Spleen (tissue), 13 donors: ENCODE measurements at regions of chr7 and their contacts with region 1.

Region 1: GRCh38 chr7:100705753-100706671 is at the start of gene POP7:
- DNase-seq: peak; percentile 99
- H3K4me3 ChIP-seq: peak within 1 kb of the TSS; percentile 72 to 92 (median 82)
- H3K27ac ChIP-seq: peak within 1 kb of the TSS; percentile 90 to 98 (median 94)
- H3K4me1 ChIP-seq: peaks cover 6 to 31% (median 26%) of the 10 kb centered on the region in 6 donors
- H3K27me3 ChIP-seq: no peaks in the 10 kb centered on the region
- CTCF ChIP-seq: no peak
- POLR2A ChIP-seq: peak in 1 of 3 donors; percentile 10
- total RNA-seq, gene POP7: 14.9 to 22.8 (median 17.2) TPM

Region 2: DNA sequence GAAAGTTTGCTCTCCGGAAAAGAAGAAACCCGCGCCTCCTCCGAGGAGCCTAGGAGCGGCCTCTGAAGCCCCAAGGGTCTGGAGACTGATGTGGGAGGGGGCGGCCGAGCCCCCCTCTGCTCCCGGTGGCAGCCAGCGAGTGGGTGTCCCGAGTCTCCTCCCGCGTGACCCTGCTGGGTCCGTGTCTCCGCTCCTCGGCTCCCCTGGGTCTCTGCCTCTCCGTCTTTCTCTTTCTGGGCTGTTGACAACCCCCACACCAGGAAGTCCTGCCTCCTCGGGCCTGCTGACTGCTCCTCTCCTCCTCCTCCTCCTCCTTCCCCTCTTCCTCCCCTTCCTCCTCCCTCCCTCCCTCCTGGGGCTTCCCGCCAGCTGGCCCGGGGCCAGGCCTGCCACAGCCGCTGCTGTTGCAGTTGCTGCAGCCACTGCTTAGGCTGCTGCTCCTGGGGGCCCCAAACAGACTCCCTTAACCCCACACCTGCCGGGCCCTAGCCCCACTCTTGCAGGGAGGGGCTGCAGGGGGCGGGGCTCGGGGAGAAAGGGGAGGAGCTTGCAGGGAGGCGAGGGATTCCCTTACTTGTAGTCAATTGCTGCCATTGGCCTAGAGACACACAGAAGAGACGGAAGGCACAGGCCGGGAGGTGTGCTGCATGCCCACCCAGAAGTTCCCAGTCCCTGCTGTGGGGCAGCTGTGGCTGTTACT is 226.9 kb before region 1 on chr7 and contains the start of gene TSC22D4:
- intact Hi-C with region 1: loop called (anchors 10 kb)
- DNase-seq: peak; percentile 98
- H3K4me3 ChIP-seq: peak within 1 kb of the TSS; percentile 90 to 99 (median 96)
- H3K27ac ChIP-seq: peak within 1 kb of the TSS; percentile 88 to 99 (median 98)
- H3K4me1 ChIP-seq: peaks cover 37 to 78% (median 61%) of the 10 kb centered on the region in 6 donors
- H3K27me3 ChIP-seq: peaks cover 0 to 7% (median 0%) of the 10 kb centered on the region in 7 donors
- CTCF ChIP-seq: peak in 1 of 11 experiments; percentile 18
- POLR2A ChIP-seq: peak; percentile 8 to 89 (median 85)
- total RNA-seq, gene TSC22D4: 67.1 to 119 (median 98.8) TPM

Region 3: GRCh38 chr7:100827330-100828227 is 121.6 kb after region 1 on chr7 and contains the start of gene EPHB4:
- intact Hi-C with region 1: no loop called
- DNase-seq: peak; percentile 87
- H3K4me3 ChIP-seq: peak within 1 kb of the TSS; percentile 45 to 80 (median 60)
- H3K27ac ChIP-seq: peak within 1 kb of the TSS; percentile 35 to 87 (median 76)
- H3K4me1 ChIP-seq: peaks cover 2 to 77% (median 51%) of the 10 kb centered on the region in 6 donors
- H3K27me3 ChIP-seq: peaks cover 0 to 68% (median 20%) of the 10 kb centered on the region in 7 donors
- CTCF ChIP-seq: peak in 2 of 11 experiments; percentile 7 to 8
- POLR2A ChIP-seq: no peak
- total RNA-seq, gene EPHB4: 82.9 to 157 (median 109) TPM

Region 4: DNA sequence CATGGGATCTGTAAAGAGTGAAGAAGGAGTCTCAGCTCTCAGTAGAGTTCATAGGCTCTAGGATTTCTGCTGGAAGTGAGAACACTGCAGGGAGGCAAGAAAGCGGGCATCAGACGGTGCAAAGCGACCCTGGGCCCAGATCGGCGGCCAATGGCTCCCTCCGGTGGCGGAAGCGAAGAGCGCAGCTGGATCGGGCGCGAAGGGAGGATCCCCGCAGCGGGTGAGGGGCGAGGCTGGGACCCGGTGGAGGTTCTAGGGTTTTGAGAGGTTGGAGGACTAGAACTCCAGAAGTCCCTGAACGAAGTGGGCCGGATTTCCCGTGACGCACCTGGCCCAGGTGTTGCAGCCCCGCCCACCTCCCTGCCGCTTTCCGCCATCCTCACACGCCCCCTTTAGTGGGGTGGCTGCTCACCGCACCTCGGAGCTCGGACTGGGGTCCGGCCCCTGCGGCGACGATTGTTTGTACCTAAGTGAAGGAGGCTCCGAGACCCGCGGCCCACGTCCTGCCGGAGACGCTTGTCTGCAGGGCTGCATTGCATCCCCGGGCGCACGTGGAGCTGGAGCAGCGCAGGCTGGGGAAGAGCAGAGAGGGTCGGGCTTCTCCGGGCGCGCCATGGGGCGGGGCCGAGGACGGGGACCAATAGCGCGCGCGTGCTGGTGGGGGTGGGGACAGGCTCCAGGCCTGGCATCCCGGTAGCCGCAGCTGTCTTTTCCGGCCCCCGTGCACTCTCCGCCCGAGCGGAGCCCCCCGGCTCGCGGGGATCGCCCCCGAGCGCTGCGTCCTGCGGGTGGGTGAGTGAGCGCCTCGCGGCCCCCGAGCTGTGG is 146.2 kb after region 1 on chr7 and contains the start of gene SLC12A9:
- intact Hi-C with region 1: loop called (anchors 10 kb)
- DNase-seq: peak; percentile 97
- H3K4me3 ChIP-seq: peak within 1 kb of the TSS; percentile 79 to 96 (median 86)
- H3K27ac ChIP-seq: peak within 1 kb of the TSS; percentile 57 to 95 (median 83)
- H3K4me1 ChIP-seq: peaks cover 12 to 59% (median 32%) of the 10 kb centered on the region in 6 donors
- H3K27me3 ChIP-seq: no peaks in the 10 kb centered on the region
- CTCF ChIP-seq: peak; percentile 85 to 97 (median 94)
- POLR2A ChIP-seq: peak in 1 of 3 donors; percentile 25
- total RNA-seq, gene SLC12A9: 34.4 to 109 (median 55.7) TPM

Region 5: GRCh38 chr7:100914879-100915447 is 209.0 kb after region 1 on chr7:
- intact Hi-C with region 1: no loop called
- DNase-seq: peak; percentile 27
- H3K4me3 ChIP-seq: no peak overlapping the region
- H3K27ac ChIP-seq: no peak overlapping the region
- H3K4me1 ChIP-seq: peaks cover 0 to 5% (median 0%) of the 10 kb centered on the region in 6 donors
- H3K27me3 ChIP-seq: peaks cover 0 to 22% (median 0%) of the 10 kb centered on the region in 7 donors
- CTCF ChIP-seq: no peak
- POLR2A ChIP-seq: no peak

Region 6: GRCh38 chr7:101058355-101058754 is 352.3 kb after region 1 on chr7:
- intact Hi-C with region 1: loop called (anchors 10 kb)
- DNase-seq: peak; percentile 72
- H3K4me3 ChIP-seq: no peak overlapping the region
- H3K27ac ChIP-seq: no peak overlapping the region
- H3K4me1 ChIP-seq: peaks cover 0 to 6% (median 2%) of the 10 kb centered on the region in 6 donors
- H3K27me3 ChIP-seq: peaks cover 0 to 88% (median 29%) of the 10 kb centered on the region in 7 donors
- CTCF ChIP-seq: no peak
- POLR2A ChIP-seq: no peak

Region 7: GRCh38 chr7:101201695-101202604 is 495.9 kb after region 1 on chr7:
- intact Hi-C with region 1: no loop called
- DNase-seq: no peak
- H3K4me3 ChIP-seq: peak overlapping the region in 6 of 8 donors; percentile 5 to 53 (median 19)
- H3K27ac ChIP-seq: no peak overlapping the region
- H3K4me1 ChIP-seq: peaks cover 0 to 41% (median 26%) of the 10 kb centered on the region in 6 donors
- H3K27me3 ChIP-seq: peaks cover 4 to 58% (median 25%) of the 10 kb centered on the region in 7 donors
- CTCF ChIP-seq: no peak
- POLR2A ChIP-seq: no peak